ENCODE measurements at regions of chr3 and their contacts with region 1.

Region 1: GRCh38 chr3:3495611-3496010 is 303.6 kb upstream of the LRRN1 start:
- DNase-seq: no peak
- ATAC-seq: no peak
- H3K4me3 ChIP-seq: no peak overlapping the region
- H3K4me3 Mint-ChIP-seq: no peak overlapping the region
- H3K27ac ChIP-seq: no peak overlapping the region
- H3K27ac Mint-ChIP-seq: no peak overlapping the region
- H3K4me1 ChIP-seq: no peaks in the 10 kb centered on the region
- H3K4me1 Mint-ChIP-seq: no peaks in the 10 kb centered on the region
- H3K27me3 ChIP-seq: no peaks in the 10 kb centered on the region
- H3K27me3 Mint-ChIP-seq: no peaks in the 10 kb centered on the region
- CTCF ChIP-seq: no peak

Region 2: DNA sequence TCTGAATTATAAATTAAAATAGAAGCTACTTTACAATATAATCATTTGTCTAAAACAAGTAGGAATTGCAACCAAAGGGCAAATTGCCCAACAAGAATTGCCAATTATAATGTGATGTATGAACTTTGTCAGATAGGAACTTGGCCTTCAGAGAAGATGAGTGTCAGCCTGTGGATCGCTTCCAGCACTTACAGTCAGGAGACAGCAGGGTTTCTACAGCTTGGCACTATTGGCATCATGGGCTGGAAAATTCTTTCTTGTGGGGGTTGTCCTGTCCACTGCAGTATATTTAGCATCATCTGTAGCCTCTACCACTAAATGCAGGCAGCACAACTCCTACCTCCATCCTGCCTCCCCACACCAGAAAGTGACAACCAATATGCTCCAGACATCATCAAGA is 268.0 kb before region 1 on chr3:
- CTCF ChIA-PET with region 1: no interaction called
- POLR2A ChIA-PET with region 1: no interaction called
- intact Hi-C with region 1: no loop called
- DNase-seq: no peak
- ATAC-seq: no peak
- H3K4me3 ChIP-seq: no peak overlapping the region
- H3K4me3 Mint-ChIP-seq: no peak overlapping the region
- H3K27ac ChIP-seq: no peak overlapping the region
- H3K27ac Mint-ChIP-seq: no peak overlapping the region
- H3K4me1 ChIP-seq: no peaks in the 10 kb centered on the region
- H3K4me1 Mint-ChIP-seq: no peaks in the 10 kb centered on the region
- H3K27me3 ChIP-seq: no peaks in the 10 kb centered on the region
- H3K27me3 Mint-ChIP-seq: no peaks in the 10 kb centered on the region
- CTCF ChIP-seq: no peak

Region 3: GRCh38 chr3:3334491-3334890 is 161.1 kb before region 1 on chr3:
- CTCF ChIA-PET with region 1: no interaction called
- POLR2A ChIA-PET with region 1: no interaction called
- intact Hi-C with region 1: no loop called
- DNase-seq: no peak
- ATAC-seq: no peak
- H3K4me3 ChIP-seq: no peak overlapping the region
- H3K4me3 Mint-ChIP-seq: no peak overlapping the region
- H3K27ac ChIP-seq: no peak overlapping the region
- H3K27ac Mint-ChIP-seq: no peak overlapping the region
- H3K4me1 ChIP-seq: no peaks in the 10 kb centered on the region
- H3K4me1 Mint-ChIP-seq: no peaks in the 10 kb centered on the region
- H3K27me3 ChIP-seq: no peaks in the 10 kb centered on the region
- H3K27me3 Mint-ChIP-seq: no peaks in the 10 kb centered on the region
- CTCF ChIP-seq: no peak

Region 4: DNA sequence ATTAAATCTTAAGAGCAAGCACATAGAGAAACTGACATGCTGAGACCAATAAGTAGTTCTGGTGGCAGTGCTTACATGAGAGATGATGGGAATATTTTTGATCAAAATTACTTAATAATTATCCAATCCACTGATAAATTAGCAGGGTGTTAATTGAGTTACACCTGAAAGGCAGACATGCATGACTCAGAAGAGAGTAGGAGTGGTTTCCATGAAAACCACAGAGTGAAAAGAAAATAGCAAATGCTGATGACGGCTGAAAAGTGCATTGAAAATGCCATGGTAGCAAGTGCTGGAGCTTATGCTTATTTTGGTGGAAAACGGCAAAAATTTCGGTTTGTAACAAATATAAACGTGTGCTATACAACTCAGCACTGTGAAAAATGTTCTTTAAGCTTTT is 35.9 kb after region 1 on chr3:
- CTCF ChIA-PET with region 1: no interaction called
- POLR2A ChIA-PET with region 1: no interaction called
- intact Hi-C with region 1: loop called in 1 of 2 experiments (anchors 2 kb)
- DNase-seq: no peak
- ATAC-seq: no peak
- H3K4me3 ChIP-seq: no peak overlapping the region
- H3K4me3 Mint-ChIP-seq: no peak overlapping the region
- H3K27ac ChIP-seq: no peak overlapping the region
- H3K27ac Mint-ChIP-seq: no peak overlapping the region
- H3K4me1 ChIP-seq: no peaks in the 10 kb centered on the region
- H3K4me1 Mint-ChIP-seq: no peaks in the 10 kb centered on the region
- H3K27me3 ChIP-seq: no peaks in the 10 kb centered on the region
- H3K27me3 Mint-ChIP-seq: no peaks in the 10 kb centered on the region
- CTCF ChIP-seq: no peak

Measured in CD8-positive, alpha-beta T cell (primary cell).